H1 (cell line): ENCODE measurements at regions of chr2 and their contacts with region 1.

Region 1: GRCh38 chr2:17646081-17646554 is 105.6 kb downstream of the VSNL1 start:
- DNase-seq: no peak
- H3K4me3 ChIP-seq: no peak overlapping the region
- H3K27ac ChIP-seq: no peak overlapping the region
- H3K4me1 ChIP-seq: peaks cover 0 to 4% (median under 1%) of the 10 kb centered on the region in 4 experiments; a peak in 2 of 7 replicates
- H3K27me3 ChIP-seq: no peaks in the 10 kb centered on the region
- CTCF ChIP-seq: peak in 2 of 3 experiments; percentile 49 to 76; a peak in 2 of 4 replicates
- EP300 ChIP-seq: no peak
- POLR2A ChIP-seq: no peak
- RAD21 ChIP-seq: peak; percentile 61 to 70

Region 2: DNA sequence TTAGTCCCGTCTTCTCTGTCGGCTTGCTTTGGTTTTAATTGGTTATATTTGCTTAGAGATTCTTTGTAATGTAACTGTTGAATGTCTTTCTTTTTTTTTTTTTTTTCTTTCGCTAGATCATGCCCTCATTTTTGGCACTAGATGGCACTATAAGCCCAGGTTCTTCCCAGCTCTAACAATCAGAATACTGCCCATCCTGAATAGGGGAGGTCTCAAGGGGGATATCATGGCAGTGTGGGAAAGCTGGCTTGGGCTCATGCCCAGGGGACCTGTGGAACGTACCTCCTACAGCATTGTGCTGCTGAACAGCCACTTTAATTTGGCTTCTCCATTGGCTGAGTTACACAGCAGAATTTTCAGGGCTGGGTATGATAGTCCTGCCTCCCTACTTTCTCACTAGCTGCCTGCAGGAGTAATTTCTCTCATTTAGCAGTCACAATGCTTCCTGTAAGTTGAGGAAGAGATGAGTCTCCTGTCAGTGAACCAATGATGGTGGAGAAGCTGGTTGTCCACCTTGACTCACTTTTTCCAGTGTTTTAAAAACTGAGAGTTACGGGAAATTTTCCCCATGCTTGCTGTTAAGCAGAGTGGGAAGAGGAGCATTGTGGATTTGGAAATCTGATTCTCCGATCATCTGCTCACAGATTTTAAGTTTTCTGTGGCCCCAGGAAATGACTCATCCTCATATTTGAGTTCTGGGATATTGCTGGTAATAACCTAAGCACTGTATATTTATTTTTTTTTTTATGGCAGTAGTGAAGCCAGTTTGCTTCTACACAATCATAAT is 175.1 kb before region 1 on chr2:
- CTCF ChIA-PET with region 1: interaction called, 10 read pairs
- POLR2A ChIA-PET with region 1: no interaction called
- DNase-seq: peak in 1 of 2 experiments; percentile 41
- H3K4me3 ChIP-seq: peak overlapping the region in 1 of 4 experiments; percentile 2; a peak in 1 of 8 replicates
- H3K27ac ChIP-seq: no peak overlapping the region
- H3K4me1 ChIP-seq: no peaks in the 10 kb centered on the region; a peak in 2 of 7 replicates
- H3K27me3 ChIP-seq: no peaks in the 10 kb centered on the region
- CTCF ChIP-seq: peak in 2 of 3 experiments; percentile 63 to 69; a peak in 3 of 4 replicates
- EP300 ChIP-seq: no peak
- POLR2A ChIP-seq: no peak
- RAD21 ChIP-seq: peak; percentile 91 to 93

Region 3: GRCh38 chr2:17578466-17578928 is 67.6 kb before region 1 on chr2:
- CTCF ChIA-PET with region 1: interaction called, 14 read pairs
- POLR2A ChIA-PET with region 1: no interaction called
- DNase-seq: no peak
- H3K4me3 ChIP-seq: no peak overlapping the region
- H3K27ac ChIP-seq: no peak overlapping the region
- H3K4me1 ChIP-seq: peaks cover 0 to 15% (median 3%) of the 10 kb centered on the region in 4 experiments; a peak in 2 of 7 replicates
- H3K27me3 ChIP-seq: no peaks in the 10 kb centered on the region
- CTCF ChIP-seq: no peak
- EP300 ChIP-seq: no peak
- POLR2A ChIP-seq: no peak
- RAD21 ChIP-seq: no peak

Region 4: GRCh38 chr2:17615728-17616351 is 30.3 kb before region 1 on chr2:
- CTCF ChIA-PET with region 1: interaction called, 22 read pairs
- POLR2A ChIA-PET with region 1: no interaction called
- DNase-seq: no peak
- H3K4me3 ChIP-seq: no peak overlapping the region
- H3K27ac ChIP-seq: no peak overlapping the region
- H3K4me1 ChIP-seq: peaks cover 0 to 9% (median 5%) of the 10 kb centered on the region in 4 experiments; a peak in 6 of 7 replicates
- H3K27me3 ChIP-seq: no peaks in the 10 kb centered on the region
- CTCF ChIP-seq: no peak
- EP300 ChIP-seq: no peak
- POLR2A ChIP-seq: no peak
- RAD21 ChIP-seq: no peak

Region 5: GRCh38 chr2:17658251-17658843 is 12.2 kb after region 1 on chr2:
- CTCF ChIA-PET with region 1: interaction called, 119 read pairs
- POLR2A ChIA-PET with region 1: no interaction called
- DNase-seq: no peak
- H3K4me3 ChIP-seq: no peak overlapping the region
- H3K27ac ChIP-seq: no peak overlapping the region
- H3K4me1 ChIP-seq: no peaks in the 10 kb centered on the region
- H3K27me3 ChIP-seq: no peaks in the 10 kb centered on the region
- CTCF ChIP-seq: no peak
- EP300 ChIP-seq: no peak
- POLR2A ChIP-seq: peak in 1 of 2 experiments; percentile 38; a peak in 1 of 3 replicates
- RAD21 ChIP-seq: no peak